ENCODE measurements at regions of chr5 and their contacts with region 1.

Region 1: GRCh38 chr5:38167562-38167996 is 90.8 kb upstream of the EGFLAM start:
- DNase-seq: peak; percentile 56 to 92
- ATAC-seq: peak; percentile 74 to 85 (median 80)
- H3K4me3 ChIP-seq: peak overlapping the region; percentile 58
- H3K27ac ChIP-seq: peak overlapping the region; percentile 88
- H3K4me1 ChIP-seq: peaks cover 28% of the 10 kb centered on the region
- H3K27me3 ChIP-seq: no peaks in the 10 kb centered on the region
- CTCF ChIP-seq: no peak

Region 2: GRCh38 chr5:37668524-37669047 is 499.0 kb before region 1 on chr5:
- intact Hi-C with region 1: loop called in 1 of 2 experiments (anchors 5 kb)
- DNase-seq: peak; percentile 67 to 85
- ATAC-seq: peak; percentile 87 to 93 (median 90)
- H3K4me3 ChIP-seq: no peak overlapping the region
- H3K27ac ChIP-seq: peak overlapping the region; percentile 93
- H3K4me1 ChIP-seq: peaks cover 47% of the 10 kb centered on the region
- H3K27me3 ChIP-seq: no peaks in the 10 kb centered on the region
- CTCF ChIP-seq: no peak

Region 3: DNA sequence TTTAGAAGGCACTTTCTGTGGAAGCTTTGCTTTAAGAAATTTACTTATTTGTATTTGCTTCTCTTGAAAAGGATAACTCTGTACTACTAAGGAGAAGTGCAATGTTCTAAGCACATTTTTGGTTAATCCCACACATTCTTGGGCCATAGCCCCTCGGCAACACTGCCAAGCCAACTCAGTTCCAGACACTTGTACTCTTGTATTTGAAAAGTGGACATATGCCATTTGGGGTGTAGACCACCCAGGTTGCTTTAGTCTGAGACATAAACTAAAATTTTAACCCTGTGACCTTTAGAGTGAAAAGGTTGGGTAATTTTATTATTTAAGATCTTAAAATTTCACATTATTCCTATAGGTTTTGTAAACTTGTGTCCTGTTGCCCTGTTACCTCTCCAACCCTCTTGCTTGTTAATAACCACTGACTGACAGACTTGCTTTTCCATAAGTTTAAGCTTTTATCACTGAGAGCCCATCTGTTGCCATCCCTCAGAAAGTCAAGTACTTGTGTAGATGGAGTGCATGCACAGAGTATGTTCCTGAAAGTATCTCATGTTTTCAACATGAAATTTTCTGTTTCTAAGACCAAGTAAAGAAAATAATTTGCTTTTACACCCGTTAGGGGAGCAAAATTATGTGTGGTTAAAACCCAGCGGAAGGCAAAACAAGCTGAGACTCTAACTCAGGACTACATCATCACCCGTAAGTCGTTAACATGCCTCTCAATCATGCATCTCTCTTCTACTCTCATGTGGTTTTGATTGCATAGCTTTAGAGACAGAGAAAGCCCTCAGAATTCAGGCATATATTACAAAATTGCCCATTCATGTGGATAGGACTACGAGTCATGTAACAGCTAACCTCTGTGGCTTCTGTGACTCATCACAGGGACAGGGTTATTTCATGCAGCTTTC is 445.1 kb before region 1 on chr5:
- intact Hi-C with region 1: loop called (anchors 10 kb)
- DNase-seq: no peak
- ATAC-seq: no peak
- H3K4me3 ChIP-seq: no peak overlapping the region
- H3K27ac ChIP-seq: peak overlapping the region; percentile 85
- H3K4me1 ChIP-seq: peaks cover 55% of the 10 kb centered on the region
- H3K27me3 ChIP-seq: no peaks in the 10 kb centered on the region
- CTCF ChIP-seq: no peak

Region 4: GRCh38 chr5:37837414-37838032 is 330.1 kb before region 1 on chr5:
- intact Hi-C with region 1: loop called (anchors 2 to 10 kb)
- DNase-seq: peak; percentile 73 to 87
- ATAC-seq: peak; percentile 29 to 70 (median 65)
- H3K4me3 ChIP-seq: peak overlapping the region; percentile 73
- H3K27ac ChIP-seq: peak overlapping the region; percentile 92
- H3K4me1 ChIP-seq: peaks cover 14% of the 10 kb centered on the region
- H3K27me3 ChIP-seq: peaks cover 0 to 24% (median 4%) of the 10 kb centered on the region in 3 donors
- CTCF ChIP-seq: peak; percentile 77

Region 5: GRCh38 chr5:38046103-38046502 is 121.5 kb before region 1 on chr5:
- intact Hi-C with region 1: loop called in 1 of 2 experiments (anchors 10 kb)
- DNase-seq: peak in 1 of 2 donors; percentile 68
- ATAC-seq: peak; percentile 46 to 93 (median 86)
- H3K4me3 ChIP-seq: no peak overlapping the region
- H3K27ac ChIP-seq: peak overlapping the region; percentile 73
- H3K4me1 ChIP-seq: peaks cover 5% of the 10 kb centered on the region
- H3K27me3 ChIP-seq: no peaks in the 10 kb centered on the region
- CTCF ChIP-seq: no peak

Region 6: DNA sequence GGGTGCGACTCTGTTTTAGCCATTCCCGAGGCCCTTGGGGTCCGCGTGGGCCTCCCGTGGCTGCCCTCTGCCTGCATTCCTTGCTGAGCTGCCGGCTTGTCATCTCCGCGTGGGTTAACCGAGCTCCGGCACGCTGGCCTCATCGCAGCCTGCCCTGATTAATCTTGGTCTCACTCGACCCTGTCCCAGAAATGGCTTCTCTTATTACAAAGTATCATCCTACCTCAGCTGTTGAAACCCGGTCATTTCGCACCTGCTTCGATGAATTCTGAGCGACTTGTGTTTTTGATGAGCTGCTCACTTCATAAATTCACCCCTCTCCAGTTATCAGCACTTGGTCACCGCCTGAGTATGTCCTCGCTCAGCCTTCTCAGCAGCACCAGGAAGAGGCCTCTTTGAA is 32.8 kb before region 1 on chr5:
- intact Hi-C with region 1: loop called in 1 of 2 experiments (anchors 2 kb)
- DNase-seq: peak; percentile 17 to 69
- ATAC-seq: peak; percentile 84 to 89 (median 88)
- H3K4me3 ChIP-seq: peak overlapping the region; percentile 42
- H3K27ac ChIP-seq: peak overlapping the region; percentile 82
- H3K4me1 ChIP-seq: peaks cover 12% of the 10 kb centered on the region
- H3K27me3 ChIP-seq: peaks cover 0 to 2% (median 0%) of the 10 kb centered on the region in 3 donors
- CTCF ChIP-seq: no peak

Region 7: DNA sequence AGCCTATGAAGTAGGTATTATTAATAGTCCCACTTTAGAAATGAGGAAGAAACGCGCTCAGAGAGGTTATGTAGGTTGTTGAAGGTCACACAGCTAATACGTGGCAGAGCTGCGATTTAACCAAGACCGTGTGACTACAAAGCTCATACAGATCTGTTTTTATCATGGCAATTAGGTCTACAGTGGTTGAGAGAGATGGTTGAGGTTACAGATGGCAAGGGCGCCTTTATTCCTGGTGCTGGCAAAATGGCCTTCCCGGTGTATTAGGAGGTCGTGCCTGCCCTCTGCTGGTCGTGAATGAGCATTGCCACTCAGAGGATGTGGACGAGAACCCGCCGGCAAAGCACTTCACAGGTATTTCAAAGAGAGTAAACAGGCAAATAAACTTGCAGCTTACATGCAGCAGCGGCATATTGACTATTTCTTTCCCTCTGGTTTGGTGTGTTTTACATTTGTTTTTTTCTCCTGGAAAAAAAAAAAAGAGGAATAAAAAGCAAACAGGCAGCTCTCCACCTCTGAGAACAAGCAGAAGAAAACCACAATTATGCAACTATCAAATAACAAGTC is 25.5 kb after region 1 on chr5:
- intact Hi-C with region 1: loop called in 1 of 2 experiments (anchors 1 kb)
- DNase-seq: peak; percentile 53 to 82
- ATAC-seq: peak; percentile 88 to 95 (median 91)
- H3K4me3 ChIP-seq: no peak overlapping the region
- H3K27ac ChIP-seq: no peak overlapping the region
- H3K4me1 ChIP-seq: peaks cover 4% of the 10 kb centered on the region
- H3K27me3 ChIP-seq: no peaks in the 10 kb centered on the region
- CTCF ChIP-seq: peak; percentile 93